ENCODE measurements at regions of chr17 and their contacts with region 1.

Region 1: GRCh38 chr17:75412455-75413317 is 7.2 kb upstream of the GRB2 start:
- DNase-seq: peak; percentile 76
- CTCF ChIP-seq: peak; percentile 81

Region 2: DNA sequence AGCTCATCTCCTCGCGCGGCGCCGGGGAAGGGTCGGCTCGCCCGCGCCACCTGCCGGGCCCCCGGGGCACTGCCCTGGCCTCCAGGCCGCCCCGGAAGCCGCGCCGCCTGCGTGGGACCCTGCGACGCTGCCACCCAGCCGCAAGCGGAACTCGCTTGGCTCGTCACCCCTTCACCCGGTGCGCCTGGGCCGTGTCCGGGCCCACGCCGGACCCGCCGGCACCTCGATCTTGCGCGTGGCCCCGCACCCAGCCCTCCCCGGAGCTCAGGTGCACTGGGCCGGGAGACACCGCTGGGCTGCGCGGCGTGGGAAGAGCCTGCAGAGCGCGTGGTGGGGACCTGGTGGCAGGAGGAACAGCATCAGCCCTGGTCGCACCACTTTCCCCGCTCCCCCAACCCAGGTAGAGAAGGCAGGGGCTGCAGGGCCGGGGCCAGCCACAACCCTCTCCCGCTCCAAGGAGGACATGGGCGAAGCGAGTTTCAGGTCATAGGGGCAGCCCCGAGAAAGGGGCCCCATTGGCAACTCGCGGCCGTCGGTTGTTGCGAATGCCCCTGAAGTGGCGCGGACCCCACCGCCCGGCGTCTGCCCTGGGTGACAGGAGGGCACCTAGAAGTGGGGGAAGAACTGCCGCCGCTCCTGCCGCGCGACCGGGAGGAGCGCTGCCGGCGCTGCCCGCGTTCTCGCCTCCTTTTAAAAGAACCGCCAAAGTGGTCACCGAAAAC is 141.3 kb before region 1 on chr17:
- in situ Hi-C with region 1: loop called (anchors 10 kb)
- DNase-seq: peak; percentile 98
- CTCF ChIP-seq: peak; percentile 95

Region 3: DNA sequence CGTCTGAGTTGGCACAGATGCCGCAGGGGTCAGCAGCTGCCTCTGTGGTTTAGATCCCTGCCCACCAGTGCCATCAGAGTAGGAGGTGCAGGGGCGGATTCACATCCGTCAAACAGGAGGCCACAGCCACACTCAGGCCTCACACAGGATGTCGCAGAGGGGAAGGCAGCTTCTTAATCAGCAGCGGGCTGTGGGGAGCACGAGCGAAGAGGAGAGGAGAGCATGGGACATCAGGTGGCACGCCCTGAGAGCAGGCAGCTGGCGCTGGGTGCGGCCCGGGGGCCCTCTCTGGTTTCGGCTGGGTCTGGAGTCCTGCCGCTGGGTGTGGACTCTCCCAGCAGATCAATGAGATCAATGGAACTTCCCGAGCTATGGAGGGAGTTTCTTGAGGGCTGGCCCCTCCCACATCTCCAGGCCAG is 122.4 kb after region 1 on chr17:
- in situ Hi-C with region 1: no loop called
- DNase-seq: peak; percentile 61
- CTCF ChIP-seq: no peak